Mucosa of descending colon (tissue), 3 donors: ENCODE measurements at regions of chr3 and their contacts with region 1.

Region 1: GRCh38 chr3:120198305-120198878 is 86.6 kb downstream of the GPR156 start:
- DNase-seq: peak in 1 of 3 donors; percentile 30
- ATAC-seq: peak; percentile 47
- H3K4me3 ChIP-seq: no peak overlapping the region
- H3K4me1 ChIP-seq: no peaks in the 10 kb centered on the region
- CTCF ChIP-seq: no peak

Region 2: DNA sequence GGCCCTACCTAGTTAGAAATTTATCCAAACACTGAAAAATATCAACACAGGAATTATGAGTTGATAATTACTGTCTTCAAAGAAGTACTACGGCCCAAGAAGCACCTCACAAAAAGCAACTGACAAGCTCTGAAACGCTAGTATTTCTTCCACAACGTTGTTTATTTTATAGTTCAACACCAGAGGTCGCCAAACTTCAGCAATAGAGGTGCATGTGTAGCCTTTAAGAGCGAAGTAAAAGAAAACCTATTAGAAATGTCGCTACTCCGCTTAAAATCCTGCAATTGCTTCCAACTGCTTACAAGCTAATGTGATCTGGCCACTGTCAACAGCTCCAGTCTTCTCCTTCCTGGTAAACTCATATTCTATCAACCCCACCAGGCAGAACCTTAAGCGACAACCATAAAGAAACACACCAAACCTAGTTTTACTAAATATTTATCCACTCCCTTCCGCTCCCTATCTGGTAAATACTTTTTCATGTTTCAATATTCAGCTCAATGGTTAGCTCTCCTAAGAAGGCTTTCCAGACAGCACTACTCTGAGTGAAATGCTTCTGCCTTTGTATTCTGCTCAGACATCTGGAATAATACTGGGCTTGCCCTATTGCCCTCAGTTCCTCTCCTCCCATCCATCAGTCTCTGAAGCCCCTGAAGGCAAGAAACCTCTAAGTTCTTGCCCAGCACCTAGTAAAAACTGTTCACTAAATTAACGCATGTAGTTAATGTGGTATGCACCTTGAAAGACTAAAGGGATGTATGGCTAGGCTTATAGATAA is 306.3 kb before region 1 on chr3:
- intact Hi-C with region 1: loop called in 1 of 2 experiments (anchors 10 kb)
- DNase-seq: peak in 1 of 3 donors; percentile 54
- ATAC-seq: peak; percentile 72
- H3K4me3 ChIP-seq: no peak overlapping the region
- H3K4me1 ChIP-seq: peaks cover 2% of the 10 kb centered on the region
- CTCF ChIP-seq: peak; percentile 40